Gastrocnemius medialis (tissue), 4 donors: ENCODE measurements at regions of chr22 and their contacts with region 1.

Region 1: DNA sequence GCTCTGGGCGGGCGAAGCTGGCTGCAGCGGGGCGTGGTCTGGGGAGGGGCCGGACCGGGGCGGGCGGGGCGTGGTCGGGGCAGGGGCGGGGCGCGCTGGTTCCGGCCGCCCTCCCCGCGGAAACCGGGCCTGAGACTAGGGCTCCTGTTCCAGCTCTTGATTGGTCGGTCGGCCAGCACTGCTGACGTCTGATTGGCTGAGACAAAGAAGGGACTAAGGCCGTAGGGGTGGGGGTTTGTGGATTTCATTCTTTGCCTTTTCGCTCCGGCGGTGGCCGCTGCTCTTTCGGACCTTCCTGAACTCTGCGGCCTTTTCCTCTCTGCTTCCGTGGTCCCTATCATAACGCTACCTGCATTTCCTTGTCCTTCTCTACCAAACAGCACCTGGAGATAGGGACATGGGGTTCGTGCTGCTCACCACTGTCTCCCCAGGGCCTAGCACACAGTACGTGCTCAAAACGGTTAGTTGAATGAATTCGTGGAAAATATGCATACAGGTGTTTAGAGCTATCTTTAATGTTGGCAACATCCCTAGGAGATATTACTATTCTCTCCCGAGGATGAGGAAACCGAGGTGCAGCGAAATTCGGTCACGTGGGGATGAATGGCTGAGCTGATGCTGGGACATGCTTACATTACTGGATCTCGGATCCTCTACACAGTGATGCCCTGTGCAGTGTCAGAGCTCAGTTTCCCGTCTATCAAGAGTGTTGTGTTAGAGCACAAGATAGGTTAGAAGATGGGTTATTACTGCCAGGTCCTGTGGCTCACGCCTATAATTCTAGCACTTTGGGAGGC is 62.8 kb downstream of the NFAM1 start:
- DNase-seq: peak; percentile 87 to 91
- ATAC-seq: peak; percentile 96 to 97
- H3K4me3 ChIP-seq: peak overlapping the region; percentile 60 to 76 (median 68)
- H3K27ac ChIP-seq: peak overlapping the region in 2 of 4 donors; percentile 39 to 40
- H3K4me1 ChIP-seq: peaks cover 11 to 18% of the 10 kb centered on the region in 2 donors
- H3K27me3 ChIP-seq: peaks cover 10 to 18% (median 13%) of the 10 kb centered on the region in 3 donors
- CTCF ChIP-seq: no peak
- POLR2A ChIP-seq: no peak

Region 2: DNA sequence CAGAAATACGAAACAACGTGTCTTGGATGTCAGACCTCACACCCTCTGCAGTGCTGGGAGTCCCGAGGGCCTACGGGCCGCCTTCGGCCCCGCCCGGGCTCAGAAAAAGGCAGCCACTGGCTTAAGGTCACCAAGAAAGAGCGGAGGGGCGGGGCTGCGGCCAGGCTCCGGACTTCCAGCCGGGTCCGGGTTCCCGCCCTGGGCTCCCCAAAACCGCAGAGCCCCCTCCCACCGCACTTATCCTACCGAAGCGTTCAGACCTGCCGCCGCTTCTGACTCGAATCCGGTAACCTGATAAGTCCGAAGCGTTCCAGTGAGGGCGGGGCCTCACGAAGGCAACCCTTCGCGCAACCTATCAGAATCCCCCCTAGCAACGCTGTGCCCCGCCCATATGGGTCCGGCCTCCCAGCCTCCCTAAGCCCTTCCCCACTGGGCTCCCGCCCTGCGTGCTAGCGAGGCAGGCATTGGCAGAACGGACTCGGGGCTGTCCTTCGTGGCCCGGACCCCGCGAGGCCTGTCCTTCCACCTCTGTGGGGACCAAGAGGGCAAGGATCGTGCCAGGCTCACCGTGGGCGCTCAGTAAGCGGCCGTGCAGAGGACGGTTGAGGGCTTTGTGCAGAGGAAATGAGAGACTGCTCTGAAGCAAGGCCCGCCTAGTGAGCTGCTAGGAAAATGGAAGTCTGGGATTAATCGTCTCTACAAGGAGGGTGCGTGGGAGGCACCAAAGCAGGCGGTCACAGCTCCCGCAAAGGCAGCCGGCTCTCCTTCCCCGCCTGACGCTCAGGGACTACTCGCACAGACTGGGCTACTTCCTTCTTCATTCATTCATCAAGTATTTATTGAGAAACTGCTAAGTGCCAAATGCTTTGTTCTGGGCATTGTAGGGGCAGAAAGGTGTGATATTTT is 298.7 kb before region 1 on chr22 and contains the start of gene NAGA:
- in situ Hi-C with region 1: no loop called
- intact Hi-C with region 1: loop called (anchors 5 kb)
- DNase-seq: peak; percentile 95 to 96
- ATAC-seq: peak; percentile 97
- H3K4me3 ChIP-seq: peak within 1 kb of the TSS; percentile 64 to 81 (median 72)
- H3K27ac ChIP-seq: peak within 1 kb of the TSS; percentile 86 to 91 (median 88)
- H3K4me1 ChIP-seq: peaks cover 11 to 26% of the 10 kb centered on the region in 2 donors
- H3K27me3 ChIP-seq: no peaks in the 10 kb centered on the region
- CTCF ChIP-seq: no peak
- POLR2A ChIP-seq: peak; percentile 68 to 88
- total RNA-seq, gene NAGA: 8.7 to 14.1 (median 11.9) TPM

Region 3: DNA sequence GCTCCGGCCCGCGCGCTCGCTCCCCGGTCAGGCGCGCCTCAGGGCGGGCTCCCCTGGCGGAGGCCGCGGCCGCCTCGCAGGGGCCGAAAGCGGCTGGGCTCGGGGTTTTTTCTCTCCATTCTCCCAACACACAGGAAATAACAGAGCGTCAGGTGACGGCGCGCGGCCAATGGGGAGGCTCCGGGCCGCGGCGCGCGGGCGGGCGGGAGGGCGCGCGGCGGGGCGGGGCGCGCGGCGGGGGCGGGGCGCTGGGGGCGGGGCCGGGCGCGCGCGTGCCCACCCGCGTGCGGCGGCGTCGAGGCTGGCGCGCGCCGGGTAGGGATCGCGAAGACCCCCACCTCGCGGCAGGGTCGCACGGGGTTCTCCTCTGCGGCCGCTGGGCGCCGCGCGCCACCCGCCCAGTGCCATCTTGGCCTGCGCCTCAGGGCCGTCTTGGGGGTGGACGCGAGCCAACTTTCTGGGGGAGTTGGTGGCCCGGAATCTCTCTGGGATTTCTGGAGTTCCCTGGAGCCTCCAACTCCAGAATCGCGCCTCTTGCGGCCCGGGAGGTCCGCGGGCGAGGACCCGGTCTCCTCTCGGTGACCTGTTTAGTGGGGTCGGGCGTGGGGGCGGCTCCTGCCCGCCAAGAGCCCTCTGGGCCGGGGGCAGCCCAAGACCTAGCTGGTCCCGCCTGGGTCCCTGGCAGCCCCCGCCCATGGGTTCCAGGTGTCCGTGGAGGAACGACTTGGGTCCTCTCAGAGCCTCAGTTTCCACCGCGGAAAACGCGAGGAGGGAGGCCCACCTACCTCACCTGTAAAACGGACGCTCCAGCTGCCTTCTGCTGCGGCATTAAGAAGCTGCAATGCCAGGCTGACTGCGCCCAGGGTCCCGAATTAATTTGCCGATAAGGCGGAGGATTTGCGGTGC is 98.7 kb before region 1 on chr22 and contains the start of gene TCF20:
- in situ Hi-C with region 1: no loop called
- intact Hi-C with region 1: loop called (anchors 2 kb)
- DNase-seq: peak; percentile 50 to 61
- ATAC-seq: peak; percentile 90 to 93
- H3K4me3 ChIP-seq: peak within 1 kb of the TSS; percentile 98 to 100 (median 98)
- H3K27ac ChIP-seq: peak within 1 kb of the TSS; percentile 87 to 90 (median 88)
- H3K4me1 ChIP-seq: peaks cover 13 to 16% of the 10 kb centered on the region in 2 donors
- H3K27me3 ChIP-seq: no peaks in the 10 kb centered on the region
- CTCF ChIP-seq: no peak
- POLR2A ChIP-seq: no peak
- total RNA-seq, gene TCF20: 9.9 to 14.4 (median 12.4) TPM